Heart left ventricle (tissue), 16 donors: ENCODE measurements at regions of chr17 and their contacts with region 1.

Region 1: DNA sequence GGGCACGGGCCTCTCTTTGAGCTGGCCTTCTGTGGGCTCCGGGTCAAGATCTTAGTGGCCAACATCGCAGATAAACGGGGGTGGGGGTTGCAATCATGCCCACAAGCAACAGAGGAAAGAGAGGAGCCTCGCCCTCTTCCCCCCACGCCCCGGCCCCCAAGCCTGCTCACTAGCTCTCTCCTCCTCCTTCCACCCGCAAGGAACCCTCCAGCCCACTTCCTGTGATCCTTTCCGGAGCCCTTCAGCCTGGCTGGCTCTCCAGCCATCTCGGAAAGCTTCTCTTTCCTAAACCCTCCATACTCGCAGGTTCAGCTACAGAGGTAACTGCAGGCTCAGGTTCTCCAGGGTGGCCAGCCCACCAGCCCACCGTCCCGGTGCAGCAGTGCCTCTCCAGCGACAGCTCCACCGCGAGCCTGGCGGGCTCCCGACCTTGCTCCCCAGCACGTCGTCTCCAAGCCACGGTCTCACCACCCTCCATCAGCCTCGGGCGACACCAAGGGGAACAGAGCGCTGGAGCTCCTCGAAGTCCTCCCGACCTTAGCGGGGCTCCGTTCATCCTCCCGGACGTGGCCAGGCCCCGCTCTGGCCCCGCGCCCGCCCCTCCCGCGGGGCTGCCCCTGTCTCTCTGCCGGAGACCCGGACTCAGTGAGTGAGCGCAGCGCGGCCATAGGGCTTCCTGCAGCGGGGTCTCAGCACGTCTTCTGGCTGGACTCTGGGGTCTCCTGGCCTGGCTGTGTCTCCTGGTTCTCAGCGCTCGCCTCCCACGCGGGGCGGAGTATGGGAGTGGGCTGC is 12.9 kb upstream of the ODF4 start:
- DNase-seq: peak; percentile 47 to 73 (median 57)
- ATAC-seq: peak; percentile 28 to 75 (median 73)
- H3K4me3 ChIP-seq: peak overlapping the region; percentile 32 to 72 (median 62)
- H3K27ac ChIP-seq: peak overlapping the region; percentile 49 to 88 (median 80)
- H3K4me1 ChIP-seq: peaks cover 0 to 36% (median 22%) of the 10 kb centered on the region in 12 donors
- H3K27me3 ChIP-seq: peaks cover 0 to 19% (median 0%) of the 10 kb centered on the region in 9 donors
- CTCF ChIP-seq: peak in 1 of 12 donors; percentile 3
- POLR2A ChIP-seq: no peak

Region 2: DNA sequence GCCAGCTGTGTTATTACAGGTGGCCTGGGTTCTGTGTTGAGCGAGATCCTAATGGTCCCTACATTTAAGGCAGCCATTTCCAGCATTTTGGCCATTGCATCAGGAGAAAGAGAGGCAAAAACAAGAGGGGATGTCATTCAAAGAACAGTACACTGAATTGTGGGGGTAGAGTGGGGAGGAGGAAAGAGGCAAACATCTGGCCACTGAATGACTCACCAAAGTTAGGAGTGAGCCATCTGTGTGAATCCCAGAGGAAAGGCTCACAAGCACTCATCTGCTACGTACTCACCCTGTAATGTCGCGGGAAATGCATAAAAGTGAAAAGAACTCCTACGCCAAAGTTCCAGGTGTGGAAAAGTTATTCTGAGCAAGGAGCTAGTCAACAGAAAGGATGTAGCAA is 33.1 kb after region 1 on chr17:
- intact Hi-C with region 1: loop called in 2 of 10 experiments (anchors 5 kb)
- DNase-seq: peak in 1 of 5 donors; percentile 39
- ATAC-seq: peak; percentile 60 to 95 (median 90)
- H3K4me3 ChIP-seq: peak overlapping the region in 2 of 12 donors; percentile 2 to 4
- H3K27ac ChIP-seq: peak overlapping the region; percentile 37 to 89 (median 70)
- H3K4me1 ChIP-seq: peaks cover 0 to 53% (median 27%) of the 10 kb centered on the region in 12 donors
- H3K27me3 ChIP-seq: no peaks in the 10 kb centered on the region
- CTCF ChIP-seq: no peak
- POLR2A ChIP-seq: no peak

Region 3: GRCh38 chr17:8376271-8377067 is 49.8 kb after region 1 on chr17 and contains the start of gene KRABD2:
- intact Hi-C with region 1: loop called in 2 of 10 experiments (anchors 2 to 10 kb)
- DNase-seq: peak; percentile 93 to 96 (median 95)
- ATAC-seq: peak; percentile 92 to 98 (median 97)
- H3K4me3 ChIP-seq: peak within 1 kb of the TSS; percentile 40 to 97 (median 81)
- H3K27ac ChIP-seq: peak within 1 kb of the TSS; percentile 69 to 98 (median 93)
- H3K4me1 ChIP-seq: peaks cover 0 to 52% (median 35%) of the 10 kb centered on the region in 12 donors
- H3K27me3 ChIP-seq: no peaks in the 10 kb centered on the region
- CTCF ChIP-seq: peak; percentile 35 to 86 (median 51)
- POLR2A ChIP-seq: peak in 1 of 2 donors; percentile 82

Region 4: GRCh38 chr17:8383143-8383822 is 56.6 kb after region 1 on chr17 and contains the start of gene RPL26:
- intact Hi-C with region 1: loop called in 2 of 10 experiments (anchors 2 to 10 kb)
- DNase-seq: peak; percentile 95 to 97 (median 96)
- ATAC-seq: peak; percentile 89 to 97 (median 92)
- H3K4me3 ChIP-seq: peak within 1 kb of the TSS; percentile 40 to 77 (median 70)
- H3K27ac ChIP-seq: peak within 1 kb of the TSS; percentile 12 to 93 (median 80)
- H3K4me1 ChIP-seq: peaks cover 0 to 51% (median 29%) of the 10 kb centered on the region in 12 donors
- H3K27me3 ChIP-seq: no peaks in the 10 kb centered on the region
- CTCF ChIP-seq: peak; percentile 96 to 99 (median 98)
- POLR2A ChIP-seq: peak in 1 of 2 donors; percentile 73
- total RNA-seq, gene RPL26: 967 to 1,970 (median 1,265) TPM

Region 5: GRCh38 chr17:8393420-8394241 is 66.9 kb after region 1 on chr17:
- intact Hi-C with region 1: no loop called
- DNase-seq: no peak
- ATAC-seq: peak in 2 of 4 donors; percentile 44 to 54
- H3K4me3 ChIP-seq: no peak overlapping the region
- H3K27ac ChIP-seq: no peak overlapping the region
- H3K4me1 ChIP-seq: peaks cover 0 to 6% (median 0%) of the 10 kb centered on the region in 12 donors
- H3K27me3 ChIP-seq: peaks cover 0 to 41% (median 21%) of the 10 kb centered on the region in 9 donors
- CTCF ChIP-seq: no peak
- POLR2A ChIP-seq: no peak